Panc1 (cell line): ENCODE measurements at regions of chr17 and their contacts with region 1.

Region 1: GRCh38 chr17:59124665-59125064 is 18.0 kb upstream of the TRIM37 start:
- DNase-seq: no peak
- ATAC-seq: no peak
- H3K4me3 ChIP-seq: no peak overlapping the region
- H3K27ac ChIP-seq: no peak overlapping the region
- H3K4me1 ChIP-seq: no peaks in the 10 kb centered on the region
- H3K27me3 ChIP-seq: no peaks in the 10 kb centered on the region
- CTCF ChIP-seq: no peak

Region 2: GRCh38 chr17:58060596-58061191 is 1064.0 kb before region 1 on chr17:
- CTCF ChIA-PET with region 1: no interaction called
- POLR2A ChIA-PET with region 1: no interaction called
- in situ Hi-C with region 1: no loop called
- intact Hi-C with region 1: no loop called
- DNase-seq: no peak
- ATAC-seq: 0 out of 2 replicates have a peak, but pooled peaks have one; percentile 21
- H3K4me3 ChIP-seq: no peak overlapping the region
- H3K27ac ChIP-seq: no peak overlapping the region
- H3K4me1 ChIP-seq: no peaks in the 10 kb centered on the region
- H3K27me3 ChIP-seq: no peaks in the 10 kb centered on the region; the same call in 1 of the 2 replicates
- CTCF ChIP-seq: no peak

Region 3: GRCh38 chr17:58615768-58616659 is 508.7 kb before region 1 on chr17:
- CTCF ChIA-PET with region 1: no interaction called
- POLR2A ChIA-PET with region 1: interaction called, 12 read pairs
- in situ Hi-C with region 1: no loop called
- intact Hi-C with region 1: no loop called
- DNase-seq: no peak
- ATAC-seq: no peak
- H3K4me3 ChIP-seq: no peak overlapping the region
- H3K27ac ChIP-seq: no peak overlapping the region
- H3K4me1 ChIP-seq: no peaks in the 10 kb centered on the region
- H3K27me3 ChIP-seq: no peaks in the 10 kb centered on the region
- CTCF ChIP-seq: no peak

Region 4: GRCh38 chr17:58703137-58703972 is 421.3 kb before region 1 on chr17:
- CTCF ChIA-PET with region 1: no interaction called
- POLR2A ChIA-PET with region 1: no interaction called
- in situ Hi-C with region 1: no loop called
- intact Hi-C with region 1: no loop called
- DNase-seq: no peak
- ATAC-seq: no peak
- H3K4me3 ChIP-seq: no peak overlapping the region
- H3K27ac ChIP-seq: no peak overlapping the region
- H3K4me1 ChIP-seq: no peaks in the 10 kb centered on the region
- H3K27me3 ChIP-seq: no peaks in the 10 kb centered on the region
- CTCF ChIP-seq: no peak

Region 5: DNA sequence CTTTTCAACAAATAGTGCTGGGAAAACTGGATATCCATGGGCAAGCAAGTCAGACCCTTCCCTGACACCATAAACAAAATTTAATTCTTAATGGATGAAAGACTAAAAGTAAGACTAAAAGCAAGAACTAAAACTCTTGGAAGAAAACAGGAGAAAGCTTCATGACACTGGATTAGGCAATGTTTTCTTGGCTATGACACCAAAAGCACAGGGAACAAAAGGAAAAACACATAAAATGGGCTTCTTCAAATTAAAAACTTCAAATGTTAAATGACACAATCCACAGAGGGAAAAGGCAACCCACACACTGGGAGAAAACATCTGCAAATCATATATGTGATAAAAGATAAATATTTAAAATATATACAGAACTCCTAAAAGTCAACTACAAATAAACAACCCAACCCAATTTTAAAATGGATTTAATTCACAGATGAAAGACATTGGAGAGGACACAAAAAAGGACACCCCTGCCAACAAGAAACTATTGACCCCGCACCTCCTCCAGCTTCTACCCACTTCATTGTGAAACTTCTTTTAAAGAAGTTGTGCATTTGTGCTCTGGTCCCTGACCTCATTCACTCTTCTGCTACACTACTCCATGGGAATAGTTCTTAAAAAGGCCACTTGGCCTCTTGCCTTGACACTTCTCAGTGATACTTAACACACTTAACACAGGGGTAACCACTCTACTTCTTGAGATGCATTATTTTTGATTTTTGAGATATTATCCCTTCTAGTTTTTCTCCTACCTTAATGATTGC is 98.3 kb before region 1 on chr17:
- CTCF ChIA-PET with region 1: no interaction called
- POLR2A ChIA-PET with region 1: no interaction called
- in situ Hi-C with region 1: no loop called
- intact Hi-C with region 1: no loop called
- DNase-seq: no peak
- ATAC-seq: no peak
- H3K4me3 ChIP-seq: no peak overlapping the region
- H3K27ac ChIP-seq: no peak overlapping the region
- H3K4me1 ChIP-seq: no peaks in the 10 kb centered on the region
- H3K27me3 ChIP-seq: no peaks in the 10 kb centered on the region
- CTCF ChIP-seq: no peak

Region 6: GRCh38 chr17:59406808-59407429 is 282.3 kb after region 1 on chr17:
- CTCF ChIA-PET with region 1: no interaction called
- POLR2A ChIA-PET with region 1: interaction called, 10 read pairs
- in situ Hi-C with region 1: no loop called
- intact Hi-C with region 1: no loop called
- DNase-seq: no peak
- ATAC-seq: no peak
- H3K4me3 ChIP-seq: no peak overlapping the region
- H3K27ac ChIP-seq: no peak overlapping the region
- H3K4me1 ChIP-seq: no peaks in the 10 kb centered on the region
- H3K27me3 ChIP-seq: no peaks in the 10 kb centered on the region
- CTCF ChIP-seq: no peak